ENCODE measurements at regions of chr18 and their contacts with region 1.

Region 1: DNA sequence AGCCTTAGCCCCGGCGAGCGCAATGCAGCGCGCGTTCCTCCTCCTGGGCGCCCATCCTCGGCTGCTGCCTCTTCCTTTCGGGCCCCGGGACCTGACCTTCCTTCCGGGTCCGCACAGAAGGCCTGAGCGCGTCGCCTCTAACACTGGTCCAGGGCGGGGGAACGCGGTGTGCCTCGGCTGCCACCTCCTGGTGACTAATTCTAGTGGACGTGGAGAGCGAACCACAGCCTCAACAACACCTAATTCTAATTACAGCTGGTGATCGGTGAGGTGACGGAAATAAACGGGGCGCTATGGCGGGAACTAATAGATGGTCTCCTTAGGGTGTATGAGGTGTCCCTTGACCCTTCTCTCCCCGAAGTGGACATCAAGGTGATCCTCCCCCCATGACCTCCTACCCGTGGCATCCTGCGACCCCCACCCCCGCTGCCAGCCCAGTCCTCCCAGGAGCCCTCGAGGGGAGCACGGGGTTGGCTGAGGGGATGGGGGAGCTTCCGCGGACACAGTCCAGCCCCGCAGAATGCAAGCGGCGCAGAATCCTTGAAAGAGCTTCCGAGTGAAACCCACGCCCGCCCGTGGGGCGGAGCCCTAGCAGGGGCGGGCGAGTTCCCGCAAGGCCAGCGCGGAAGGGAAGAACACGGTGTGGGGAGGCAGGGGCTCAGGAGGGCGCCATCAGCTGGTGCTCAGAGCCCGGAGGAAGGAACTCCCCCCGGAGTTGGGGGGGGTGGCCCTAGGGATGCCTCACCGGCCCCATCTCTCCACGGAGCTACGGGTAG is 12.8 kb upstream of the HMSD start:
- DNase-seq: peak; percentile 70
- H3K4me3 ChIP-seq: peak overlapping the region; percentile 60 to 81 (median 62)
- H3K27ac ChIP-seq: no peak overlapping the region
- H3K4me1 ChIP-seq: peaks cover 12% of the 10 kb centered on the region
- H3K27me3 ChIP-seq: no peaks in the 10 kb centered on the region
- CTCF ChIP-seq: peak; percentile 67 to 88

Region 2: GRCh38 chr18:63518178-63519012 is 417.9 kb before region 1 on chr18:
- CTCF ChIA-PET with region 1: no interaction called
- dilution Hi-C with region 1: no loop called
- in situ Hi-C with region 1: loop called in 1 of 2 experiments (anchors 25 kb)
- intact Hi-C with region 1: loop called (anchors 1 kb)
- DNase-seq: peak; percentile 64
- H3K4me3 ChIP-seq: no peak overlapping the region
- H3K27ac ChIP-seq: no peak overlapping the region
- H3K4me1 ChIP-seq: no peaks in the 10 kb centered on the region
- H3K27me3 ChIP-seq: no peaks in the 10 kb centered on the region
- CTCF ChIP-seq: peak; percentile 55 to 67

Region 3: GRCh38 chr18:63534615-63535014 is 401.7 kb before region 1 on chr18:
- CTCF ChIA-PET with region 1: no interaction called
- dilution Hi-C with region 1: loop called (anchors 5 kb)
- in situ Hi-C with region 1: no loop called
- intact Hi-C with region 1: no loop called
- DNase-seq: peak; percentile 6
- H3K4me3 ChIP-seq: no peak overlapping the region
- H3K27ac ChIP-seq: no peak overlapping the region
- H3K4me1 ChIP-seq: no peaks in the 10 kb centered on the region
- H3K27me3 ChIP-seq: no peaks in the 10 kb centered on the region
- CTCF ChIP-seq: no peak

Region 4: GRCh38 chr18:63578357-63578958 is 357.9 kb before region 1 on chr18:
- CTCF ChIA-PET with region 1: no interaction called
- dilution Hi-C with region 1: no loop called
- in situ Hi-C with region 1: no loop called
- intact Hi-C with region 1: loop called (anchors 2 kb)
- DNase-seq: no peak
- H3K4me3 ChIP-seq: no peak overlapping the region
- H3K27ac ChIP-seq: no peak overlapping the region
- H3K4me1 ChIP-seq: no peaks in the 10 kb centered on the region
- H3K27me3 ChIP-seq: no peaks in the 10 kb centered on the region
- CTCF ChIP-seq: peak; percentile 77 to 83

Region 5: GRCh38 chr18:63882333-63883141 is 53.8 kb before region 1 on chr18:
- CTCF ChIA-PET with region 1: no interaction called
- dilution Hi-C with region 1: no loop called
- in situ Hi-C with region 1: no loop called
- intact Hi-C with region 1: loop called (anchors 2 kb)
- DNase-seq: peak; percentile 100
- H3K4me3 ChIP-seq: peak overlapping the region in 1 of 3 experiments; percentile 6
- H3K27ac ChIP-seq: peak overlapping the region; percentile 99
- H3K4me1 ChIP-seq: peaks cover 30% of the 10 kb centered on the region
- H3K27me3 ChIP-seq: no peaks in the 10 kb centered on the region
- CTCF ChIP-seq: no peak

Region 6: DNA sequence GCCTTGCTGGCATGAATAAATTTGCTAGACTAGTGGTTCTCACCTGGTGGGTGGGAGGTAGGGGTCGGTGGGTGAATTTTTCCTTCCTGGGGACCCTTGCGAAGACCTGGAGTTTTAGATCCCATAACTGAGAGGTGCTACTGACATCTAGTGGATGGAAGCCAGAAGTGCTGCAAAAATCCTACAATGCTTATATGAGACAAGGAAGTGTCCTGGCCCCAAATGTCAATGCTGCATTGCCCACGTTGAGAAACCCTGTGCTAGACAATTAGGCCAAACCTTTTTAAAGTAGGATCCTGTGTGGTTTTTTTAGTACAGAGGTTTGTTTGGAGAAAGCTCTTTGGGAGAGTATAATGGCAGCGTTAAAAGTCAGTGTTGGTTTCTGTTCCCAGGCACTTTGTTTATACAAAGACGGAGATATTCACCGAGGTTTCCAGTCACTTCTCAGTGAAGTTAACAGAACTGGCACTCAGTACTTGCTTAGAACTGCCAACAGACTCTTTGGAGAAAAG is 43.1 kb after region 1 on chr18:
- CTCF ChIA-PET with region 1: no interaction called
- dilution Hi-C with region 1: no loop called
- in situ Hi-C with region 1: no loop called
- intact Hi-C with region 1: loop called (anchors 1 kb)
- DNase-seq: peak; percentile 24
- H3K4me3 ChIP-seq: no peak overlapping the region
- H3K27ac ChIP-seq: no peak overlapping the region
- H3K4me1 ChIP-seq: peaks cover 8% of the 10 kb centered on the region
- H3K27me3 ChIP-seq: no peaks in the 10 kb centered on the region
- CTCF ChIP-seq: peak; percentile 93 to 96